ENCODE measurements at regions of chr9 and their contacts with region 1.

Region 1: DNA sequence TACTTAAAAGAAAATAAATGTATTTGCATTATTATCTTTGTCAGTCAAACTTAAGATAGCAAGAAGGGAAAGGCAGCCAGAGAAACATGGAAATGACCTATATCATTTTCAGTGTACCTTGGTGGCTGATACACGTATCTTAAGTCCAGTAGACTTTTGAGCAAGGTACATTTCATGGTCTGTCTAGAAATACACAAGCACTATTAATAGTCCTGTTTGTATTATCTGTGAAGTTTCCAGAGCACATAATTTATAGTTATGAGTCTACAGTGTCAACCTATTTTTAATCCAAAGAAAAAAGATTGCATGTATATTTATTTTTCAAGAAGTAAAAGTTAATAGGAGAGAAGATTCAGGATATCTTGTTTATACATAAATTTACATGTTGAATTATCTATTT is 95.7 kb downstream of the IZUMO3 start:
- DNase-seq: no peak
- H3K4me3 Mint-ChIP-seq: no peak overlapping the region
- H3K27ac Mint-ChIP-seq: no peak overlapping the region
- H3K4me1 Mint-ChIP-seq: no peaks in the 10 kb centered on the region
- H3K27me3 Mint-ChIP-seq: no peaks in the 10 kb centered on the region

Region 2: DNA sequence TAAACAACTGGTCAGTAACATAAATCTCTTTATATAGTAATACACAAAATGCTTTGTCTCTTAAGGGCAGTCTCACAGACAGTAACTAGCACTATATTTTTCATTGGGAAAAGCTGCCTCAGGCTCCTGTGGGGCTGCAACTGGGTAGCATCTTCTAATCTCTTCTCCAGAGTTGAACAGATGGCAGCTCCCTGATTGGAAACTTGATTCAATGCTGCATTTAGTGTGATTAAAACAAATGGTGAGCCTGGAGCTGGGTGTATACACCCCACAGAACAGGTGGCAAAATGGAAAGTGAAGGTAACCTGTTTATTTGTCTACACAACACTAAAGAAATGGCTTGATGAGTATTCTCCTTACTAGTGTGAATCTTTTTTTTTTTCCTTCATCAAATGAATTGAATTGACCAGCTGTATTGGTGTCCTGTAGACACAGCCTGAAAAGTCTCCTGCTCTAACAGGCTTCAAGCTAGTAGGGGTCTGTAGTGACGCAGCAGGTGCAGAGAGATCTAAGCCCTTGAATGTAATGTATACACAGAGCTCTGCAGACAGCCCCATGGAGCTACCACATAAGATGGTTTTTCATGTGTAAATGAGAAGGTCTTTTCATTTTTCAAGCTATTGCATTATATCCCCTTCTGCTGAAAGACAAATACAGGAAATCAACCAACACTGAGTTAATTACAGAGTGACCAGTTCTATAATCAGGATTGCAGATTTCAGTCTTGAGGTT is 52.4 kb after region 1 on chr9:
- CTCF ChIA-PET with region 1: no interaction called
- intact Hi-C with region 1: loop called (anchors 10 kb)
- DNase-seq: no peak
- H3K4me3 Mint-ChIP-seq: no peak overlapping the region
- H3K27ac Mint-ChIP-seq: no peak overlapping the region
- H3K4me1 Mint-ChIP-seq: no peaks in the 10 kb centered on the region
- H3K27me3 Mint-ChIP-seq: no peaks in the 10 kb centered on the region